ENCODE measurements at regions of chr7 and their contacts with region 1.

Region 1: GRCh38 chr7:83655951-83656556 is 7.1 kb upstream of the SEMA3E start:
- DNase-seq: peak; percentile 67
- ATAC-seq: peak; percentile 79
- H3K4me3 ChIP-seq: no peak overlapping the region
- H3K27ac ChIP-seq: no peak overlapping the region
- H3K4me1 ChIP-seq: no peaks in the 10 kb centered on the region
- H3K27me3 ChIP-seq: no peaks in the 10 kb centered on the region
- CTCF ChIP-seq: peak; percentile 94

Region 2: DNA sequence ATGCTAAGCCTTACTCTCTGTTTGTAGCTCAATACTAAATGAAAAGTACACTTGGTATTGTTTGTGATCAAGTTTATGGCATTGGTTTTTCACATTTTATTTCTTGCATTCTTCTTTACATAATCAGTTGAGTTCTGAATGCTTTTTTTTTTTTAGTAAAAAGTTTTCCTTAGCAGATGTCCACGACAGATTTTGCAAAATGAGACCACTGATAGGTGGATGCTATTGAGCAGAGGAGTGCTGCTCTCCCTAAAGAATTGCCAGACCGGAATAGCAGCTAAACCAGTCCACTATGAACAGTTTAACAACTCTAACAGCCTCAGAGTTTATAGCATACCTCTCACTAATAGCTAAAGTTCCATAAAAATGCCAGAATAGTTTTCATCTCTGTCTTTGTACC is 987.4 kb before region 1 on chr7:
- CTCF ChIA-PET with region 1: interaction called, 11 read pairs
- POLR2A ChIA-PET with region 1: no interaction called
- intact Hi-C with region 1: no loop called
- DNase-seq: no peak
- ATAC-seq: no peak
- H3K4me3 ChIP-seq: no peak overlapping the region
- H3K27ac ChIP-seq: no peak overlapping the region
- H3K4me1 ChIP-seq: no peaks in the 10 kb centered on the region
- H3K27me3 ChIP-seq: no peaks in the 10 kb centered on the region
- CTCF ChIP-seq: no peak

Region 3: GRCh38 chr7:82714883-82715282 is 941.2 kb before region 1 on chr7:
- CTCF ChIA-PET with region 1: no interaction called
- POLR2A ChIA-PET with region 1: no interaction called
- intact Hi-C with region 1: no loop called
- DNase-seq: no peak
- ATAC-seq: no peak
- H3K4me3 ChIP-seq: no peak overlapping the region
- H3K27ac ChIP-seq: no peak overlapping the region
- H3K4me1 ChIP-seq: no peaks in the 10 kb centered on the region
- H3K27me3 ChIP-seq: no peaks in the 10 kb centered on the region
- CTCF ChIP-seq: no peak

Region 4: DNA sequence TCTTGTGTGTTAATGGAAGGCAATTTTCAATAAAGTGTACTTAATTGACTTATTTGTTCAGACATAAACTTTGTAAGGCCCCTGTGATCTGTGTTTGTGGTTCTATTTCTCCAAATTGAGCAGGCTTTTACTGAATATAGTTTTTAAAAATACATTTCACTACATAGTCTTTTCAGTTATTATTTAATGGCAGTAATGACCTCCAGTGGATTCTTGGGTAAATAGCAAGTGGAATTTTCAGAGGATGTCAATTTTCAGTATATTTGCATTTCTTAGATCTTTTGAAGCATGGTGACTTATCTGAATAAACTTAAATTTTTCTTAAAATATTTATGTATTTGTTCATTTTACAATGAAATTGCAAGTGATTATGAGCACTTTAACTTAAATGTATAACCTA is 290.3 kb before region 1 on chr7:
- CTCF ChIA-PET with region 1: no interaction called
- POLR2A ChIA-PET with region 1: no interaction called
- intact Hi-C with region 1: loop called (anchors 1 kb)
- DNase-seq: peak; percentile 19
- ATAC-seq: peak; percentile 43; the same call in 1 of the 2 replicates
- H3K4me3 ChIP-seq: no peak overlapping the region
- H3K27ac ChIP-seq: no peak overlapping the region
- H3K4me1 ChIP-seq: no peaks in the 10 kb centered on the region
- H3K27me3 ChIP-seq: no peaks in the 10 kb centered on the region
- CTCF ChIP-seq: peak; percentile 45; the same call in 1 of the 2 replicates

Region 5: GRCh38 chr7:83410989-83411591 is 245.0 kb before region 1 on chr7:
- CTCF ChIA-PET with region 1: no interaction called
- POLR2A ChIA-PET with region 1: no interaction called
- intact Hi-C with region 1: loop called (anchors 1 kb)
- DNase-seq: peak; percentile 64
- ATAC-seq: no peak
- H3K4me3 ChIP-seq: no peak overlapping the region
- H3K27ac ChIP-seq: no peak overlapping the region
- H3K4me1 ChIP-seq: no peaks in the 10 kb centered on the region
- H3K27me3 ChIP-seq: no peaks in the 10 kb centered on the region
- CTCF ChIP-seq: peak; percentile 76

Region 6: DNA sequence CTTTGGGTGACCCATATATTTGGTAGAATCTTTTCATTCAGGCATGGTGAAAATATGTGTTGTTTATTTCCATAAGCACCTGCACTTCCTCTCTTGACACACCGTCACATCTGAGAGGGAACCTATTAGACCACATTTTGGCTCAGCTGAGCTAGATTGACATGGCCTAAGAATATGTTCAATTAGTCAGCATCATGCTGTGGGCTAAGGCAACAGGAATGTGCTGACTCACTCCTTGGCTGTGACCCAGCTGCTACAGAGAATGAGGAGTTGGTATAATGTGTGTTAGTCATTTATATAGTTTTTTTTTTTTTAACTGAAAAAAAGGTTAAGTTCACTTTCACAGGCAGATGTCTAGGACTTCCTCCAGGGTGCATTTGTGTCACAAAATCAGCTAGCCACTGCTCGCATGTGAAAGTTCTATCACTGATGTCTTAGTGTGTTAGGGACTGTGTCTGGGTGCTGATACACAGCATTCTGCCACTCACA is 187.8 kb before region 1 on chr7:
- CTCF ChIA-PET with region 1: no interaction called
- POLR2A ChIA-PET with region 1: no interaction called
- intact Hi-C with region 1: loop called (anchors 2 kb)
- DNase-seq: peak; percentile 99
- ATAC-seq: peak; percentile 93
- H3K4me3 ChIP-seq: peak overlapping the region; percentile 45
- H3K27ac ChIP-seq: no peak overlapping the region; the same call in 1 of the 2 replicates
- H3K4me1 ChIP-seq: peaks cover 14% of the 10 kb centered on the region
- H3K27me3 ChIP-seq: no peaks in the 10 kb centered on the region
- CTCF ChIP-seq: 0 out of 2 replicates have a peak, but pooled peaks have one; percentile 13

Region 7: DNA sequence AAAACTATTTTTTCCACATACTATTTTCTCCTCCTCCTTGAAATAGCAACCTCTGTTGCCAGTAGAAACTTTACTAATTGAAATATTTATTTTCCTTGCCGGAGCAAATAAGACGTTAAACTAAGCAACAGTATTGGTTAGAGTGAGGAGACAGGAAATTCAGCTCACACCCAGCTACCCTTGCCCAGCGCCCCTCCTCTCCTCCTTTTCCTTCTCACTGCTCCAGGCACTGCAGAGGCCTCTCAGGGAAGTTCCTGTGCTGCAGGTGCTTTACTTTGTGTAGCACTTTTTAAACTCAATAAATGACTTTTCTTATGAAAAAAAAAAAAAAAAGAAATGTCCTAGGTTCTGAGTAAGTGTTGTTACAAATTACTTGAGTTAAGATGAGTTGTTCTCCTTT is 141.1 kb before region 1 on chr7:
- CTCF ChIA-PET with region 1: no interaction called
- POLR2A ChIA-PET with region 1: no interaction called
- intact Hi-C with region 1: loop called (anchors 1 kb)
- DNase-seq: no peak
- ATAC-seq: no peak
- H3K4me3 ChIP-seq: no peak overlapping the region
- H3K27ac ChIP-seq: no peak overlapping the region
- H3K4me1 ChIP-seq: no peaks in the 10 kb centered on the region
- H3K27me3 ChIP-seq: no peaks in the 10 kb centered on the region
- CTCF ChIP-seq: no peak

Region 8: DNA sequence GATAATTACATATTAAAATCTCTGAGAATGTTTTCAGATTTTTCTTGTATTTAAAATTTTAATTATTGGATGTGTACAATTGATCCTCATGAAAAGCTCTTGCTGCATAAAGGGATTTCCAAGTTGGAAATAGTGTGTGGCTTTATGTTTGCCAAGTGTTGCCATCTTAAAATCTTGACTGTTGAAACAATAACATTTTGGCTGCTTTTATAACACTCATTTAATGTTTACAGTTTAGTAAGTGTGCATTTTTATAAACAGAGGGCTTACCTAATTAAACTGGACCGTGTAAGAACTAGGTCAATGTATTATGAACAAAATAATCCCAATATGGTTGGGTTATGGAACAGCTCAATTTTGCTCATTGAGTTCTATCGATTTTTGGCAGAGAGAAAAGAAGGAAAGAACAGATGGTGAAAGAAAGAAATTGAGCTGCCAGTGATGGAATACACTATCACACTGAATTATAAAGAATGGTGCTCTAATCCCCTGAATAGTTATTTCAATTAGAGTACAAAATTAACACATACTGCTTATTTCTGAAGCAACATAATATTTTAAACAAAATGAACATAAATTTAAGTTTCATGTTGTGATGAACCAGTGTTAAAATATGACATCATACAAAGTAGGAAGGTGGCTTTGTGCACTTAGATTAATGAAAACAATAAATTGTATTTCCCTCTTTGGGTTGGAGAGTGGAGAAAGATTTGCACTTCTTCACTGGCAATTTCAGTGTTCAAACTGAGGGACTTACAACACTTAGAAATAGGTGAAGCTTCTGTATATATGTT is 514.8 kb after region 1 on chr7:
- CTCF ChIA-PET with region 1: no interaction called
- POLR2A ChIA-PET with region 1: no interaction called
- intact Hi-C with region 1: no loop called
- DNase-seq: no peak
- ATAC-seq: no peak
- H3K4me3 ChIP-seq: no peak overlapping the region
- H3K27ac ChIP-seq: no peak overlapping the region
- H3K4me1 ChIP-seq: no peaks in the 10 kb centered on the region
- H3K27me3 ChIP-seq: no peaks in the 10 kb centered on the region
- CTCF ChIP-seq: no peak